ENCODE measurements at regions of chr3 and their contacts with region 1.

Region 1: DNA sequence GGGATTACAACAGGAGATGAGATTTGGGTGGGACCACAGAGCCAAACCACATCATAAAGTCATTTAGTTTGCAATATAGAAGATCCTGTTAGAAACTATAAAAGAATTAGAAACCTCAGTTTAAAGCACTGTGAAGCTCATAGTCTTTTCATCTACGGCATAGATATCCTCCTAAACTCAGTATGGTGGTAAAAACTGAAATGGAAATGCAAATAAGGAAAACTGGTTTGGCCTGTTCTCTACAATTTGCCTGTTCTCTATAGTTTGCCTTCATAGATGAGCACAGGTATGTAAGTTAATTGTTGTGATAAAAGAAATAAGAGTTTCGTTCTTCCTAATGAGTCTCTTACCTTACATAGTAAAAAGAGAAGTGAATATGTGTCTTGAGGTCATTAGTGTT is 331.6 kb upstream of the ARL6 start:
- DNase-seq: no peak

Region 2: GRCh38 chr3:97421565-97421964 is 11.3 kb before region 1 on chr3:
- intact Hi-C with region 1: loop called (anchors 2 kb)
- DNase-seq: no peak